ENCODE measurements at regions of chr12 and their contacts with region 1.

Region 1: DNA sequence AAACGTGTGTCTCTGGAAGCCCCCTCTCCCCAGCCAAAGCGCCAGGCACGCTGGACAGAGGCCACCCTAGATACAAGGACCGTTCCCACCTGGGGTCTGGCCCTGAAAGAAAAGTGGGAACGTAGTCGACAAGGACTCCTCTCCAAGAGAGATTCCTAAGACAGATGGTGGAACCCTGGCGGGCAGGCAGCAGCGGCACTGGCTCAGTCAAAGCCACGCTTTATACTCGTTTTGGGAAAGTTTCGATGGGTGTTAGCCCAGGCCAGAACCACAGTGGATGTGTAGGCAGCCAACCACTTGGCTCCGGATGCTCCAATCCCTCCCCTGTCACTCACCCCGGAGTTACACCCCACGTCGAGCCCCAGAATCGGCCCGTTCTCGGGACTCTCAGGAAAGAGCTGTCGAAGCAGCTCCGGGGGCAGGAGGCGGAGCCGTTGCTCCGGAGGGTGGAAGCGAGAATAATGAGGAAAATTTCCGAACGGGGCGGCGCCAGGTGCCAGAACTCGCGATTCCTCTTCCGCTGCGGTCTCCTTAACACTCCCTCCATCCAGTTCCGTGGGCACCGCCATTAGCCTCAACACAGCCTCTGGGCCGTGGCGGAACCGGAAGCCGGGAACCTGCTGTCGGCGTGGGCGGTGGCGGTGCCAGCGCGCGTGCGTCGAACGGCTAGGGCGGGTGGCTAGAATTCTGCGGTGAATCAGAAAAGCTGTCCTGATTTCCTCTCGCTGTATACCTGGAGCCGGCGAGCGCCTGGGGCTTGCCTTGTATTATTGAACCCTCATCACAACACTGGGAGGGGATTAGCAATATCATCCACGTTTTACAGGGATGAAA is at the start of gene BCDIN3D:
- DNase-seq: peak; percentile 86

Region 2: DNA sequence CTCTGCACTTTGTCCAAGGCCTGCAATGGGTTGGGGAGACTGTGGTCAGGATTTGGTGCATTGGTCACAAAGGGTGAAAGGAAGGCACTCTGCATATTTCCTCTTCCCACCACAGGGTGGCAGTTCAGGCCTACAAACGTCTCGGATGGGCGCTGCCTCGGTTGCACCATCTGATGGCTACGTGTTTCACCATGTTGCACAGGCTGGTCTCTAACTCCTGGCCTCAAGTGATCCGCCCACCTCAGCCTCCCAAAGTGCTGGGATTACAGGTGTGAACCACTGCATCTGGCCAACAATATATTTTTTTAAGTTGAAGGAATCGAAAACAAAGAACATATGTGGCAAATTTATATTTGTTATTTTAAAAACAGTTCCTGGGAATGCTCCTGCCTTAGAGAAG is 66.3 kb before region 1 on chr12:
- CTCF ChIA-PET with region 1: interaction called, 21 read pairs
- POLR2A ChIA-PET with region 1: interaction called, 7 read pairs
- DNase-seq: peak; percentile 79

Region 3: DNA sequence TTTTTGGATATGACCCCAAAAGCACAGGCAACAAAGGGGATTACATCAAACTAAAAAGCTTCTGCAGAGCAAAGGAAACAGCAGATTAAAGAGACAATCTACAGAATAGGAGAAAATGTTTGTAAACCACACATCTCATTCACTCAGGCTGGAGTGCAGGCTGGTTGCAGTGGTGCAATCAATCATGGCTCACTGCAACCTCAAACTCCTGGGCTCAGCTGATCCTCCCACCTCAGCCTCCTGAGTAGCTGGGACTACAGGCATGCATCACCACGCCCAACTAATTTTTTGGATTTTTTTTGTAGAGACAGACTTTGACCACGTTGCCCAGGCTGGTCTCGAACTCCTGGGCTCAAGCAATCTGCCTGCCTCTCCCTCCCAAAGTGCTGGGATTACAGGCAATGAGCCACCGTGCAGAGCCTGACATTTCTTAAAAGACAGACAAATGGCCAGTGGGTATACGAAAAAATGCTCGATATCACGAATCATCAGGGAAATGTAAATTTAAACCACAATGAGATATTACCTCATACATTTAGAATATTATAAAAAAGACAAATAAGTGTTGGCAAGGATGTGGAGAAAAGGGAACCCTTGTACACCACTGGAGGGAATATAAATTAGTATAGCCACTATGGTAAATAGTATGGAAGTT is 24.4 kb before region 1 on chr12:
- CTCF ChIA-PET with region 1: no interaction called
- POLR2A ChIA-PET with region 1: no interaction called
- DNase-seq: no peak

Region 4: GRCh38 chr12:49828133-49829091 is 14.3 kb before region 1 on chr12 and contains the start of gene NCKAP5L:
- CTCF ChIA-PET with region 1: interaction called, 6 read pairs
- POLR2A ChIA-PET with region 1: interaction called, 18 read pairs
- DNase-seq: peak; percentile 97

Region 5: DNA sequence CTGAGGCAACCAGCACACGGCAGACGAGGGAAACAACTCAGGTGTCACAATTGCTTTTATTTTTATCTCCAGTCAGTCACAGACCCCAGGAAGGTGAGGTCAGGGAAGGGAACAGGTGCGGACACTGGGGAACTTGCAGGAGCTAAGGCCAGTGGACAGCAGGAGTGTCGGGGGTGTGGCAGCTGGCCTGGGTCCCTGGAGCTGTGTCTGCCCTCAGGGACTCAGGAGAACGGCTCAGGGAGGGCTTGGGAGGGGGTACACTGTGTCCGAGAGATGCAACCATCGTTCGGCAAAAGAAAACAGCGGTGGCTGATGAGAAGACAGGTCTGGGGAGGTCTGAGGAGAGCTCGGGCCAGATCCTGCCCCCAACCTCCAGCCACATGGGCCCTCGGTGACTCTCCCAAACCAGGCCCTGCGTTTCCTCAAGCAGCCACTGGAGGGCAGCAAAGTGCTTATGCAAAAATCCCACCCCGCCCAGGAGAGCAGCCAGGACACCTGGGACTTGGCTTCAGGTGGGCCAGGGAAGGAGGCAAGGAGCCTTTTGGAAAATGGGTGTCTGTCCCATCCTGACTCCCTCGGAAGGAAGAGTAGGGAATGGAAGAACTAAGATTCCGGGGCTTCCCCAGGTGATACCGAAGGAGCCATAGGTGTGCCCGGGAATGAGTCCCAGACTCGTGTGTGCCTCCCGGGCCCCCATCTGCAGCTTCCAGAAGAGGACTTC is 24.3 kb after region 1 on chr12:
- CTCF ChIA-PET with region 1: interaction called, 4 read pairs
- POLR2A ChIA-PET with region 1: interaction called, 11 read pairs
- DNase-seq: peak; percentile 89

Region 6: GRCh38 chr12:49983892-49984291 is 141.2 kb after region 1 on chr12:
- CTCF ChIA-PET with region 1: no interaction called
- POLR2A ChIA-PET with region 1: no interaction called
- DNase-seq: no peak

Measured in HEK293T (cell line).